Spleen (tissue), 13 donors: ENCODE measurements at regions of chr5 and their contacts with region 1.

Region 1: DNA sequence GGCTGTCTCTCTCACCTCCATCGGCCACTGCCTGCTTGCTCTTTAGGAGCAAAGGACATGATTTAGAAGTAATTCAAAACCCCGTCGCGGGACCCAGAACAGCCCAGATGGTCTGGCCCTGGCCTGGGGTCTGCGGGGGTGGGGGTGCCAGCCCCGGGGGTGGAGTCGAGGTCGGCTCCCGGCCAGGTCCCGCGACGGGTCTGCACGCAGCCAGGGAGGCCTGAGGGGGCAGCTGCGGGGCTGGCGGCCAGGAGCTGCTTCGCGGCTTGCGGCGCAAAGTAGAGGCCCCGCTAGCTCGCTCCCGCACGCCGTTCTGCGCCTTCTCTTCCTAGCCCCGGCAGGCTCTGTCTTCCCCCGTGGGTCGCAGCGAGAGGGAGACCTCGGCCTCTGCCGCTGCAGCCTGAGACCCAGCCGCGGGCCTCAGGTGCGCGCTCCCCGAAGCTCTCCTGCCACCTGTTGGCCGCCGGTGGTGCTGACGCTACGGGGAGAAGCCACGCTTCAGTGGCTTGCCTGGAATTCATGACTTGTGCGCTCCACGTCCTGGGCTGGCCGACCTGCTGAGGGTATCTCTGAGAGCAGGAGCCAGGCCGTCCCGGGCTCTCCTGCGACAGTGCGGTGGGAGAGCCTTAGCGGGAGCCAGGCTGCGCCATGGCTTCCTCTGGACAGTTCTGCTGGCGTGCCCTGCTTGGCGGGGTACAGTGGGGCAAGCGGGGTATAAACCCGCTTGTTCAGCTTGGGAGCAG is 157.2 kb upstream of the PITX1 start:
- DNase-seq: peak; percentile 92
- H3K4me3 ChIP-seq: peak overlapping the region in 7 of 8 donors; percentile 5 to 70 (median 37)
- H3K27ac ChIP-seq: no peak overlapping the region
- H3K4me1 ChIP-seq: peaks cover 0 to 19% (median 11%) of the 10 kb centered on the region in 6 donors
- H3K27me3 ChIP-seq: peaks cover 0 to 57% (median 36%) of the 10 kb centered on the region in 7 donors
- CTCF ChIP-seq: peak; percentile 72 to 90 (median 84)
- POLR2A ChIP-seq: no peak

Region 2: DNA sequence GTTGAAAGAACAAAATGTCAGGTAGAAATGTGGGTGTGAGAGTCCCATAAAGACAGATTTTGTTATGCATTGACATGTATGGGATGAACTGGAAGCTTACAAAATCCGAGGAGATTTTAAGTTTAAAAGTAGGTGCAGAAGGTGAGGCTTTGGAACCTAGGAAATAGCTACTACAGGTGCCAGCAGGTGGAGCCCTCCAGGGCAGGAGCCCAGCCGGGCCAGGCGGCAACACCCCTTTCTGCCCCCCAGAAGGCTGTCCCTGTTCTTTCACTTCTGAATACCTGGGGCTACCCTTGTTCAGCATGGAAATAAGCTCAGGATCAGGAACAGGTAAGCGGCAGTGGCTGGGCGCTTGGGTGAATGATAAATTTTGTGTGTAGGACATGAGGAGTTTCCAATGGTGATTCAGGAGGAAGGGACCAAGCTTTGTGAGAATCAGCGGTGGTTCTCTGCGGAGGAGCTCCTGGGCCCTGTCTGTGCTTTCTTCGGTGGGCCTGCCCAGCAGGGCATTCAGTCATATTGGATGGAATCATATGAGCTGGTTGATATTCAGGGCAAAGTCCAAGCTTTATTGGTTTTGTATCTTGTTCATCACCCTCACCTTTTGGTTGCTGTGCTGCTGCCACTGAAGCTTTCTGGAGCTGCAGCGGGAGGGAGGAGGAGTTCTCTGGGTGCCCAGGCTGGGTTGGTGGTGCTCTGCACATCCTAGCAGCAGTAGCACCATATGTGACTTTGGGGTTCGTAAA is 274.0 kb before region 1 on chr5:
- intact Hi-C with region 1: loop called (anchors 5 kb)
- DNase-seq: no peak
- H3K4me3 ChIP-seq: no peak overlapping the region
- H3K27ac ChIP-seq: no peak overlapping the region
- H3K4me1 ChIP-seq: no peaks in the 10 kb centered on the region
- H3K27me3 ChIP-seq: no peaks in the 10 kb centered on the region
- CTCF ChIP-seq: no peak
- POLR2A ChIP-seq: no peak

Region 3: GRCh38 chr5:135398853-135399523 is 207.7 kb after region 1 on chr5 and contains the start of gene MACROH2A1:
- intact Hi-C with region 1: no loop called
- DNase-seq: peak; percentile 99
- H3K4me3 ChIP-seq: peak within 1 kb of the TSS; percentile 73 to 92 (median 76)
- H3K27ac ChIP-seq: peak within 1 kb of the TSS; percentile 81 to 95 (median 93)
- H3K4me1 ChIP-seq: peaks cover 24 to 57% (median 52%) of the 10 kb centered on the region in 6 donors
- H3K27me3 ChIP-seq: no peaks in the 10 kb centered on the region
- CTCF ChIP-seq: peak in 5 of 11 experiments; percentile 12 to 15 (median 14)
- POLR2A ChIP-seq: peak; percentile 10 to 85 (median 80)
- total RNA-seq, gene MACROH2A1: 139 to 288 (median 210) TPM